T-cell (primary cell): ENCODE measurements at regions of chr15 and their contacts with region 1.

Region 1: GRCh38 chr15:90233376-90234095 is at the start of gene CIB1:
- DNase-seq: peak; percentile 29 to 98 (median 96)
- ATAC-seq: peak; percentile 78 to 87 (median 84)
- H3K4me3 ChIP-seq: peak within 1 kb of the TSS; percentile 82 to 88
- H3K4me3 Mint-ChIP-seq: peak within 1 kb of the TSS; percentile 86 to 93 (median 88)
- H3K27ac ChIP-seq: peak within 1 kb of the TSS; percentile 92
- H3K27ac Mint-ChIP-seq: peak within 1 kb of the TSS; percentile 97 to 98
- H3K4me1 ChIP-seq: peaks cover 32 to 57% of the 10 kb centered on the region in 2 experiments
- H3K4me1 Mint-ChIP-seq: peaks cover 55 to 64% (median 58%) of the 10 kb centered on the region in 3 donors
- H3K27me3 ChIP-seq: no peaks in the 10 kb centered on the region
- H3K27me3 Mint-ChIP-seq: no peaks in the 10 kb centered on the region
- total RNA-seq, gene CIB1: 112 to 201 (median 139) TPM

Region 2: DNA sequence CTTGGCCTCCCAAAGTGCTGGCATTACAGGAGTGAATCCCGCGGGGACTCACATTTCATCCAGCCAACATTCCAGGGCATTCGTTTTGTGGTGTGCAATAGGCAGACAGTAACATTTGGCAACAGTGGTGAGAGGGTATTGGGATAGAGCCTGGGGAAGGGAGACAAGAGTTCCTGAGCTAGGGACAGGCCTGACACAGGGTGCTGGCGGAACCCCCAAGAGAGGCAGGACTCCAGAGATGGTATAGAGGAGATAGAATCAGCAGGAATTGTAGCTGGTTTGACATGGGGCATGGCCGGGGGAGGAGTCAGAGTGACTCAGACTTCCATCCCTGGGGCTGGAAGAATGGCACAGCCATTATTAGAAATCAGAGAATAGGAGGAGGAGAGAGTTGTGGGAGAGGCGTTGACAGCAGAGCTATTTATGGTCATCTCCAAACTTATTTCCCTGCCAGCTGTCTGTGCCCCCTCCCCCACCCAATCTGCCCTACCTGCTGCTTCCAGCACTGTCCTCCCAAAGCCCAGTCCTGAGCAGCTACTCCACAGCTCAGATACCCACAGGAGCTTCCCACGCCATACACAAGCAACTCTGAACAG is 126.9 kb before region 1 on chr15:
- CTCF ChIA-PET with region 1: no interaction called
- POLR2A ChIA-PET with region 1: no interaction called
- DNase-seq: no peak
- ATAC-seq: no peak
- H3K4me3 ChIP-seq: no peak overlapping the region
- H3K4me3 Mint-ChIP-seq: no peak overlapping the region
- H3K27ac ChIP-seq: no peak overlapping the region
- H3K27ac Mint-ChIP-seq: no peak overlapping the region
- H3K4me1 ChIP-seq: peaks cover 0 to 8% of the 10 kb centered on the region in 2 experiments
- H3K4me1 Mint-ChIP-seq: peaks cover 8 to 10% (median 8%) of the 10 kb centered on the region in 3 donors
- H3K27me3 ChIP-seq: peaks cover 0 to 7% of the 10 kb centered on the region in 2 experiments
- H3K27me3 Mint-ChIP-seq: peaks cover 0 to 3% of the 10 kb centered on the region in 2 donors

Region 3: GRCh38 chr15:90191794-90192509 is 41.6 kb before region 1 on chr15:
- CTCF ChIA-PET with region 1: interaction called in 1 of 2 experiments, 6 read pairs
- POLR2A ChIA-PET with region 1: interaction called, 3 to 11 read pairs
- DNase-seq: peak in 25 of 35 experiments; percentile 14 to 49 (median 29)
- ATAC-seq: peak; percentile 79 to 91 (median 88)
- H3K4me3 ChIP-seq: peak overlapping the region; percentile 16 to 29
- H3K4me3 Mint-ChIP-seq: peak overlapping the region; percentile 43 to 81 (median 64)
- H3K27ac ChIP-seq: peak overlapping the region; percentile 32
- H3K27ac Mint-ChIP-seq: peak overlapping the region; percentile 81 to 89
- H3K4me1 ChIP-seq: peaks cover 23 to 31% of the 10 kb centered on the region in 2 experiments
- H3K4me1 Mint-ChIP-seq: peaks cover 23 to 41% (median 26%) of the 10 kb centered on the region in 3 donors
- H3K27me3 ChIP-seq: no peaks in the 10 kb centered on the region
- H3K27me3 Mint-ChIP-seq: no peaks in the 10 kb centered on the region

Region 4: DNA sequence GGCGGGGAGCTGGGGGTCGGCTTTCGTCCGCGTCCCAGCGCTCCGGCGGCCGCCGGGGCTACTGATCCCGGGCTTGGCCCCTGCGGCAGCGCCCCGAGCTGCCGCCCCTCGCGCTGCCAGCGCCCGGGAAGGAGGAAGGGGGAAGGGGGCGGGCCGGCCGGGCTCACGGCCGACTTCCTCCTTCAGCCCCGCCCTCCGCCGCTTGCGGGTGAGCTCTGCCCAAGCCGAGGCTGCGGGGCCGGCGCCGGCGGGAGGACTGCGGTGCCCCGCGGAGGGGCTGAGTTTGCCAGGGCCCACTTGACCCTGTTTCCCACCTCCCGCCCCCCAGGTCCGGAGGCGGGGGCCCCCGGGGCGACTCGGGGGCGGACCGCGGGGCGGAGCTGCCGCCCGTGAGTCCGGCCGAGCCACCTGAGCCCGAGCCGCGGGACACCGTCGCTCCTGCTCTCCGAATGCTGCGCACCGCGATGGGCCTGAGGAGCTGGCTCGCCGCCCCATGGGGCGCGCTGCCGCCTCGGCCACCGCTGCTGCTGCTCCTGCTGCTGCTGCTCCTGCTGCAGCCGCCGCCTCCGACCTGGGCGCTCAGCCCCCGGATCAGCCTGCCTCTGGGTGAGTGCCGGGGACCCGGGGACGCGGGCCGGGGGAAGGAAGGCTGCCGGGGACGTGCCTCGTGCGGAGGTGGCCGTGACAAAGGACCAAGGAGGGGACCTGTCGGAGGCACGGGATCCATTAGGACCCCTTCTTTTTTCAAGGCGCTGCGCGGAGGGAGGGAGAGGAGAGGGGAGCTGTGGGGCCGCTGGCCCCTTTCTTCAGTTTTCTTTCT is 32.2 kb before region 1 on chr15 and contains the start of gene SEMA4B:
- CTCF ChIA-PET with region 1: no interaction called
- POLR2A ChIA-PET with region 1: interaction called in 1 of 2 experiments, 11 read pairs
- DNase-seq: peak; percentile 26 to 82 (median 63)
- ATAC-seq: peak; percentile 93 to 96 (median 94)
- H3K4me3 ChIP-seq: peak within 1 kb of the TSS; percentile 61 to 87
- H3K4me3 Mint-ChIP-seq: peak within 1 kb of the TSS; percentile 84 to 96 (median 91)
- H3K27ac ChIP-seq: peak within 1 kb of the TSS; percentile 8
- H3K27ac Mint-ChIP-seq: peak within 1 kb of the TSS; percentile 79 to 86
- H3K4me1 ChIP-seq: peaks cover 13 to 26% of the 10 kb centered on the region in 2 experiments
- H3K4me1 Mint-ChIP-seq: peaks cover 21 to 29% (median 22%) of the 10 kb centered on the region in 3 donors
- H3K27me3 ChIP-seq: peaks cover 0 to 4% of the 10 kb centered on the region in 2 experiments
- H3K27me3 Mint-ChIP-seq: no peaks in the 10 kb centered on the region
- total RNA-seq, gene SEMA4B: 11.7 to 34.7 (median 25.4) TPM

Region 5: GRCh38 chr15:90265271-90266060 is 31.9 kb after region 1 on chr15 and contains the start of gene NGRN:
- CTCF ChIA-PET with region 1: interaction called in 1 of 2 experiments, 6 read pairs
- POLR2A ChIA-PET with region 1: interaction called in 1 of 2 experiments, 18 read pairs
- DNase-seq: peak; percentile 84 to 96 (median 91)
- ATAC-seq: peak; percentile 88 to 91 (median 90)
- H3K4me3 ChIP-seq: peak within 1 kb of the TSS; percentile 89
- H3K4me3 Mint-ChIP-seq: peak within 1 kb of the TSS; percentile 95 to 97 (median 95)
- H3K27ac ChIP-seq: peak within 1 kb of the TSS; percentile 96
- H3K27ac Mint-ChIP-seq: peak within 1 kb of the TSS; percentile 98 to 99
- H3K4me1 ChIP-seq: peaks cover 26 to 44% of the 10 kb centered on the region in 2 experiments
- H3K4me1 Mint-ChIP-seq: peaks cover 48 to 54% (median 52%) of the 10 kb centered on the region in 3 donors
- H3K27me3 ChIP-seq: no peaks in the 10 kb centered on the region
- H3K27me3 Mint-ChIP-seq: no peaks in the 10 kb centered on the region
- total RNA-seq, gene NGRN: 44.5 to 53.1 (median 46.1) TPM

Region 6: DNA sequence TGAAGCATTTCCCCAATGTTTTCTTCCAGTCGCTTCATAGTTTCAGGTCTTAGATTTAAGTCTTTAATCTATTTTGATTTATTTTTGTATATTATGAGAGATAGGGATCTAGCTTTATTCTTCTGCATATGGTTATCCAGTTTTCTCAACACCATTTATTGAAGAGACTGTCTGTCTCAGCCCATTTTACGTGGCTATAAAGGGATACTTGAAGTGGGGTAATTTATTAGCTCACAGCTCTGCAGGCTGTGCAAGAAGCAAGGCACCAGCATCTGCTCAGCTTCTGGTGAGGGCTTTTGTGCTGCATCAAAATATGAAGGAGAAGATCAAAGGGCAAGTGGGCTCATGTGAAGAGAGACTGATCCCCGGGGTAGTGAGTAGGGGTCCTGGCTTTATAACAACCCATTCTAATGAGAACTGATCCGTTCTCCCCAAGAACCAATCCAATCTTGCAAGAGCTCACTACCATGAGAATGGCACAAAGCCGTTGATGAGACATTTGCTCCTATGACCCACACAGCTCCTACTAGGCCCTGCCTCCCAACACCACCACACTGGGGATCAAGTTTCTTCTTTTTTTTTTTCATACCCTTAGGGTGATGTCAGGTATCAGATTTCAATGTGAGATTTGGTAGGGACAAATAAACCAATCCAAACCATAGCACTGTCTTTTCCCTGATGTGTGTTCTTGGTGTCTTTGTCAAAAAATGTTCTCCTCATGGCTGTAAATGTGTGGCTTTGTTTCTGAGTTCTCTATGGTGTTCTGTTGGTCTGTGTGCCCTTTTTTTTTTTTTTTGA is 217.7 kb after region 1 on chr15:
- CTCF ChIA-PET with region 1: no interaction called
- POLR2A ChIA-PET with region 1: no interaction called
- DNase-seq: no peak
- ATAC-seq: no peak
- H3K4me3 ChIP-seq: no peak overlapping the region
- H3K4me3 Mint-ChIP-seq: no peak overlapping the region
- H3K27ac ChIP-seq: no peak overlapping the region
- H3K27ac Mint-ChIP-seq: peak overlapping the region in 1 of 2 donors; percentile 17
- H3K4me1 ChIP-seq: no peaks in the 10 kb centered on the region
- H3K4me1 Mint-ChIP-seq: peaks cover 0 to 2% (median 0%) of the 10 kb centered on the region in 3 donors
- H3K27me3 ChIP-seq: no peaks in the 10 kb centered on the region
- H3K27me3 Mint-ChIP-seq: no peaks in the 10 kb centered on the region